ENCODE measurements at regions of chr13 and their contacts with region 1.

Region 1: DNA sequence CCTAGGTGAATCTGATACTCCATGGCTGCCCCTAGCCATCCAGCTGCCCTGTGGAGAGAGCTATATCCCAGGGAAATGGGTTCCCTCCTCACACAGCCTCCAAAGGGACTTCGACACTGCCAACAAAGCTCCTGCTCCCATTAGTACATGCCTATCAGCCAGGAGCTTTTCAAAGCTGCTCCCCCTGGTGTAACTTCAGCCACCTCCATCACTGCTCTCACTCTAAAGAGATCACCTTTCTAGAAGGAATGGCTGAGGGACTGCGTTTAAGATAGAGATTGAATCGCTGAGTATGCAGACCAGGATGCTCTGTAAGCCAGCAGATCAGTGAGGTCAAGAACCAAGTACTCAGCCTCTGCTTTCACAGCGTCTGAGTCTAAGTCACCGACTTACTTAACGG is 213.7 kb downstream of the NALCN start:
- DNase-seq: no peak
- H3K4me3 ChIP-seq: no peak overlapping the region
- H3K27ac ChIP-seq: no peak overlapping the region
- H3K4me1 ChIP-seq: no peaks in the 10 kb centered on the region
- H3K27me3 ChIP-seq: no peaks in the 10 kb centered on the region
- CTCF ChIP-seq: no peak
- POLR2A ChIP-seq: no peak

Region 2: GRCh38 chr13:102170295-102170694 is 967.7 kb after region 1 on chr13:
- intact Hi-C with region 1: loop called (anchors 5 kb)
- DNase-seq: no peak
- H3K4me3 ChIP-seq: no peak overlapping the region
- H3K27ac ChIP-seq: no peak overlapping the region
- H3K4me1 ChIP-seq: no peaks in the 10 kb centered on the region
- H3K27me3 ChIP-seq: no peaks in the 10 kb centered on the region
- CTCF ChIP-seq: no peak
- POLR2A ChIP-seq: no peak

Measured in vagina (tissue), 2 donors.